Vagina (tissue), 2 donors: ENCODE measurements at regions of chr17 and their contacts with region 1.

Region 1: GRCh38 chr17:41738077-41738735 is 3.8 kb upstream of the HAP1 start:
- DNase-seq: no peak
- H3K4me3 ChIP-seq: no peak overlapping the region
- H3K27ac ChIP-seq: no peak overlapping the region
- H3K4me1 ChIP-seq: peaks cover 28% of the 10 kb centered on the region
- H3K27me3 ChIP-seq: no peaks in the 10 kb centered on the region
- CTCF ChIP-seq: peak; percentile 93 to 98 (median 98)
- POLR2A ChIP-seq: no peak

Region 2: GRCh38 chr17:41571561-41572434 is 166.4 kb before region 1 on chr17 and contains the start of gene KRT9:
- intact Hi-C with region 1: no loop called
- DNase-seq: no peak
- H3K4me3 ChIP-seq: no peak within 1 kb of the TSS
- H3K27ac ChIP-seq: no peak within 1 kb of the TSS
- H3K4me1 ChIP-seq: no peaks in the 10 kb centered on the region
- H3K27me3 ChIP-seq: no peaks in the 10 kb centered on the region
- CTCF ChIP-seq: no peak
- POLR2A ChIP-seq: no peak
- total RNA-seq, gene KRT9: not detected

Region 3: GRCh38 chr17:41695954-41696756 is 42.1 kb before region 1 on chr17:
- intact Hi-C with region 1: no loop called
- DNase-seq: no peak
- H3K4me3 ChIP-seq: no peak overlapping the region
- H3K27ac ChIP-seq: peak overlapping the region; percentile 85
- H3K4me1 ChIP-seq: peaks cover 24% of the 10 kb centered on the region
- H3K27me3 ChIP-seq: no peaks in the 10 kb centered on the region
- CTCF ChIP-seq: peak; percentile 25 to 69 (median 55)
- POLR2A ChIP-seq: no peak

Region 4: GRCh38 chr17:41801374-41802271 is 63.4 kb after region 1 on chr17:
- intact Hi-C with region 1: loop called (anchors 5 kb)
- DNase-seq: no peak
- H3K4me3 ChIP-seq: peak overlapping the region; percentile 12 to 33
- H3K27ac ChIP-seq: peak overlapping the region; percentile 88
- H3K4me1 ChIP-seq: peaks cover 19% of the 10 kb centered on the region
- H3K27me3 ChIP-seq: no peaks in the 10 kb centered on the region
- CTCF ChIP-seq: peak; percentile 92 to 98 (median 94)
- POLR2A ChIP-seq: no peak

Region 5: DNA sequence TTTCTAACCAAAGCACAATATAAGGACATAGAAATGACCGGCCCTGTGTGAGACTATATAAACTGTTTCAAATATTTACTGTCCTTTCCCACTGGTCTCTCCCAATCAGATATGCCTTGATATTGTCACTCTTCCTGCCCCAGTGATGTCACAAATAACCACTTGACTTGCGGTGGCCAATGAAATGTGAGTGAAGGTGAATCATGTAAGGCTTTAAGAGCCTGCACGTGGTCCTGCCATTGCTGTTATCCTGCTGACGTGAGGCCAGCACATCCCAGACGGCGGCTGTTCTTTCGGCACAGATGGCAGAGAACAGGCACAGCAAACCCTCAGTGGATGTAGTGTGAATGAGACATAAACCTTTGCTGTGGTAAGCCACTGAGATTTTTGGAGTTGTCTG is 132.4 kb after region 1 on chr17:
- intact Hi-C with region 1: no loop called
- DNase-seq: no peak
- H3K4me3 ChIP-seq: no peak overlapping the region
- H3K27ac ChIP-seq: no peak overlapping the region
- H3K4me1 ChIP-seq: no peaks in the 10 kb centered on the region
- H3K27me3 ChIP-seq: no peaks in the 10 kb centered on the region
- CTCF ChIP-seq: no peak
- POLR2A ChIP-seq: no peak

Region 6: DNA sequence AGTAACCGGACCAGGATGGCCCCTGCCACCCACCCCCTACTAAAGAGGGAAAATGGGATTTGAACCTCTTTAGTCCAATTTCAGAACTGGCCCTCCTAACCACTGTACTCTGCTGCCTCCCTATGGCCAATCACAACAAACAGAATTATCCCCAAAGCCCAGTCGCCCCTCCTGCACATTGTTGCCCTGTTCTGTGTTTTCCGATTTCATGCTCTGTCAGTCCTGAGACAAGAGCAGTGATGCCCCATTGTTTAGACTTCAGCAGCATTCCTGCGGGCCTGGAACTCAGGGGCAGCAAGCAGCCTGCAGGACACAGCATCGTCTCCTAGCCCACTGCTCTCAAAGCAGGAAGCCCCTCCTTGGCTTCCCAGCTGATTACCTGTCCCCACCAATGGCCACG is 147.5 kb after region 1 on chr17:
- intact Hi-C with region 1: no loop called
- DNase-seq: no peak
- H3K4me3 ChIP-seq: no peak overlapping the region
- H3K27ac ChIP-seq: no peak overlapping the region
- H3K4me1 ChIP-seq: no peaks in the 10 kb centered on the region
- H3K27me3 ChIP-seq: no peaks in the 10 kb centered on the region
- CTCF ChIP-seq: no peak
- POLR2A ChIP-seq: no peak